Thyroid gland (tissue), 4 donors: ENCODE measurements at regions of chr19 and their contacts with region 1.

Region 1: GRCh38 chr19:32405431-32406161 is at the start of gene DPY19L3:
- DNase-seq: peak; percentile 96 to 97
- H3K4me3 ChIP-seq: peak within 1 kb of the TSS; percentile 72 to 96 (median 85)
- H3K27ac ChIP-seq: peak within 1 kb of the TSS; percentile 94 to 98 (median 97)
- H3K4me1 ChIP-seq: peaks cover 13 to 19% of the 10 kb centered on the region in 2 donors
- H3K27me3 ChIP-seq: no peaks in the 10 kb centered on the region
- CTCF ChIP-seq: no peak
- POLR2A ChIP-seq: peak; percentile 73 to 89
- total RNA-seq, gene DPY19L3: 29.7 to 49.2 (median 39.8) TPM

Region 2: GRCh38 chr19:32345261-32346207 is 60.1 kb before region 1 on chr19 and contains the start of gene ZNF507:
- intact Hi-C with region 1: loop called (anchors 10 kb)
- DNase-seq: peak; percentile 80 to 83
- H3K4me3 ChIP-seq: peak within 1 kb of the TSS; percentile 78 to 91 (median 84)
- H3K27ac ChIP-seq: peak within 1 kb of the TSS; percentile 76 to 80 (median 80)
- H3K4me1 ChIP-seq: peaks cover 18 to 24% of the 10 kb centered on the region in 2 donors
- H3K27me3 ChIP-seq: no peaks in the 10 kb centered on the region
- CTCF ChIP-seq: no peak
- POLR2A ChIP-seq: peak in 1 of 2 donors; percentile 50
- total RNA-seq, gene ZNF507: 28.6 to 46.9 (median 38.0) TPM